OCI-LY7 (cell line): ENCODE measurements at regions of chr15 and their contacts with region 1.

Region 1: GRCh38 chr15:31254431-31255175 is 72.0 kb upstream of the KLF13 start:
- DNase-seq: peak; percentile 79
- H3K4me3 ChIP-seq: no peak overlapping the region
- H3K27ac ChIP-seq: peak overlapping the region; percentile 26
- H3K4me1 ChIP-seq: peaks cover 39% of the 10 kb centered on the region
- CTCF ChIP-seq: no peak

Region 2: GRCh38 chr15:31236184-31237042 is 18.2 kb before region 1 on chr15:
- CTCF ChIA-PET with region 1: no interaction called
- POLR2A ChIA-PET with region 1: interaction called, 55 read pairs
- intact Hi-C with region 1: no loop called
- DNase-seq: peak; percentile 80
- H3K4me3 ChIP-seq: peak overlapping the region; percentile 23
- H3K27ac ChIP-seq: peak overlapping the region; percentile 89
- H3K4me1 ChIP-seq: peaks cover 84% of the 10 kb centered on the region
- CTCF ChIP-seq: no peak; the same call in 1 of the 2 replicates

Region 3: DNA sequence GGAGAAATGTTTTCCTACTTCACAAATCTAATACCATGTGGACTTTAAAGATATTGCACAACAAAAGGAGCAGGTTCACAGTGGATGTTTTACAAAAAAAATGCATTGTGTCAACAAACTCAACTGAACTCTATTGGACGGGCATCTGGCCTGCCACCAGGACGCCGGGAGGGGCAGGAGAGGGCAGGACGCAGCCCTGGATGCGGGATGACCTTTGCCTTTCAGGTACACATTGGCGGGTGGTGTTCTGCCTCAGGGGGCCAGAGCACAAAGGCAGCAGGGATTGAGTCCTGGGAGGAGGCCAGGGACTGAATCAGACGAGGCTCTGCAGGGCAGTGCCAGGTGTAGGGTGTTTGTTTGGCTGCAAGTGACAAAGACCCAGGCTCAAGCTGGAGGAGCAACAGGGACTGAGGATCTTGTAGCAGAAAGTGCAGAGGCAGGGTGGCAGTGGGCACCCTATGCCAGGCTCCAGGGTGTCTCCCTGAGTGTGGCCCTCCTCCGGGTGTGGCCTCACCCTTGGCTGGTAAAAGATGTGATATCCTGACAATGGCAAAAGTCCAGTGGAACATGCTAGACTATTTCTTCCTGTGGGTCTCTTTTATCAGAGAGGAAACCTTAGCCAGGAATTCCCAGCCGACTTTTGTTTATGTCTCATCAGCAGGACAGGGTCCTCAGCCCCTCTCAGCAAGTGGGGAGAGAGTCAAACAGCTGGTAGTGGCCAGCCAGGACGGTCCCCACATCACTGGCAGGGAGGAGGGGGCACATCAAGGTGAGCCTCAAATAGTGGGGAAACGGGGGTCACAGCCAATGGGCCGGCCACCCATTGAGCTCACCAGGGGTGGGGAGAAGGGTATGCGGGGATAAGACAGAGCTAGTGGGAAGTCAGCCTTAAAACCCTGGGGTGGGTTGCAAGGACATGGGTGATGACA is 42.3 kb after region 1 on chr15:
- CTCF ChIA-PET with region 1: no interaction called
- POLR2A ChIA-PET with region 1: no interaction called
- intact Hi-C with region 1: no loop called
- DNase-seq: no peak
- H3K4me3 ChIP-seq: no peak overlapping the region
- H3K27ac ChIP-seq: no peak overlapping the region
- H3K4me1 ChIP-seq: peaks cover 47% of the 10 kb centered on the region
- CTCF ChIP-seq: no peak